Activated B cell treated with CpG ODN at 0.5 μM for 24 hours (primary cell): ENCODE measurements at regions of chr15 and their contacts with region 1.

Region 1: DNA sequence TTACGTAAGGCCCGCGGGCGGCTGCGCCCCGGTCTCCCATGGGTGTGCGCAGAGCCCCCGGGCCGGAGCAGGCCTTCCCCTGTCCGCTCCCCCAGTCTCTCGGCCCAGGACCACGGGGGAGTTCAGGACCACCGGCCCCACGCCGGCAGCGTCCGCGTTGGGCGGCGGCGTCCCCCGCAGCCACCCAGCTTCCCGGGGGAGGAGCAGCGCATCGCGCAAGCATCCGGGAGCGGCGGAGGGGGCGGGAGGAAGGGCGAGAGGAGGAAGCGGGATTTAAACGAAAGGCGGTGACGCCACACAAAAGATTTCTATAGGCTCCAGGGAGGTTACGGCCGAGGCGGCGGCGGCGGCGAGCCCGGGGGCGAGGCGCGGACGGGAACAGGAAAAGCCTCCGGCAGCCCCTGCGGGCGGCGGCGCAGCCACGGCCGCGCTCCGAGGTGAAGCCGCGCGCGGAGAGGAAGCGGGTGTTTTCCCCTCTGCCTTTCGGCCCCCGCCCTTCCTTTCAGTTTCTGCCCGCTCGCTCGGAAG is at the start of gene TLNRD1:
- DNase-seq: peak; percentile 80
- ATAC-seq: peak; percentile 65
- H3K4me3 Mint-ChIP-seq: peak within 1 kb of the TSS; percentile 94
- H3K27ac Mint-ChIP-seq: peak within 1 kb of the TSS; percentile 96
- H3K4me1 Mint-ChIP-seq: peaks cover 47% of the 10 kb centered on the region
- H3K27me3 Mint-ChIP-seq: no peaks in the 10 kb centered on the region
- CTCF ChIP-seq: no peak
- total RNA-seq, gene TLNRD1: 25.7 TPM in 2 replicates

Region 2: GRCh38 chr15:80929225-80929624 is 71.5 kb before region 1 on chr15:
- CTCF ChIA-PET with region 1: no interaction called
- POLR2A ChIA-PET with region 1: no interaction called
- intact Hi-C with region 1: no loop called
- DNase-seq: no peak
- ATAC-seq: no peak
- H3K4me3 Mint-ChIP-seq: no peak overlapping the region
- H3K27ac Mint-ChIP-seq: no peak overlapping the region
- H3K4me1 Mint-ChIP-seq: no peaks in the 10 kb centered on the region
- H3K27me3 Mint-ChIP-seq: no peaks in the 10 kb centered on the region
- CTCF ChIP-seq: no peak

Region 3: DNA sequence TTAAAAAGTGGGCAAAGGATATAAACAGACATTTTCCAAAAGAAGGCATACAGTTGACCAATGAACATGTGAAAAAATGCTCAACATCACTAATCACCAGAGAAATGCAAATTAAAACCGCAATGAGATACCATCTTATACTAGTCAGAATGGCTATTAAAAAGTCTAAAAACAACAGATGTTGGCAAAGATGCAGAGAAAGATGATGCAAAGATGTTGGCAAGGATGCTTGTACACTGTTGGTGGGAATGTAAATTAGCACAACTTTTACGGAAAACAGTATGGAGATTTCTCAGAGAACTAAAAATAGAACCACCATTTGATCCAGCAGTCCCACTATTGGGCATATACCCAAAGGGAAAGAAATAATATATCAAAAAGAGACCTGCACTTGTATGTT is 53.5 kb after region 1 on chr15:
- CTCF ChIA-PET with region 1: no interaction called
- POLR2A ChIA-PET with region 1: no interaction called
- intact Hi-C with region 1: loop called (anchors 5 kb)
- DNase-seq: no peak
- ATAC-seq: no peak
- H3K4me3 Mint-ChIP-seq: no peak overlapping the region
- H3K27ac Mint-ChIP-seq: no peak overlapping the region
- H3K4me1 Mint-ChIP-seq: peaks cover 15% of the 10 kb centered on the region
- H3K27me3 Mint-ChIP-seq: no peaks in the 10 kb centered on the region
- CTCF ChIP-seq: no peak

Region 4: GRCh38 chr15:81182756-81183438 is 182.2 kb after region 1 on chr15:
- CTCF ChIA-PET with region 1: no interaction called
- POLR2A ChIA-PET with region 1: no interaction called
- intact Hi-C with region 1: no loop called
- DNase-seq: no peak
- ATAC-seq: no peak
- H3K4me3 Mint-ChIP-seq: no peak overlapping the region
- H3K27ac Mint-ChIP-seq: no peak overlapping the region
- H3K4me1 Mint-ChIP-seq: no peaks in the 10 kb centered on the region
- H3K27me3 Mint-ChIP-seq: peaks cover 18% of the 10 kb centered on the region
- CTCF ChIP-seq: no peak